ENCODE measurements at regions of chr9 and their contacts with region 1.

Region 1: GRCh38 chr9:128438343-128439109 is 17.3 kb upstream of the ODF2 start:
- DNase-seq: peak; percentile 71 to 94 (median 81)
- H3K4me3 ChIP-seq: no peak overlapping the region
- H3K27ac ChIP-seq: peak overlapping the region in 28 of 59 donors; percentile 5 to 76 (median 47)
- H3K27me3 ChIP-seq: no peaks in the 10 kb centered on the region
- CTCF ChIP-seq: peak; percentile 63 to 98 (median 94)

Region 2: DNA sequence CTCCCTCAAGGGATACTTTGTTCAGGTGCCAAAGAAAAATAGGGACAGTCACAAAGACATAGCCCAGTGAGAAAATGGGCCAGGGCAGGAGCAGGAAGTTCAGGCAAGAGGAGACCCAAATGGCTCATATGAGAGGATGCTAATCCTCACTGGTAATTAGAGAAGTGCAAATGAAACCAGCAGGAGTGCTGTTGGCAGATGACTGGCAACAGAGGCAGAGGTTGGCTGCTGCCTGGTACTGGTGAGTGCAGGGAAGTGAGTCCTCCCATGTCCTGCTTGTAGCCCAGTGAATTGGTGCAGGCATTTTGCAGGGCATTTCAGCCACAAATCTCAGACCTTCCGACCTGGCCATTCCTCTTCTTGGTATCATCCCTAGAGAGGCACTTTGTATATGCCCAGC is 40.7 kb after region 1 on chr9:
- intact Hi-C with region 1: no loop called
- DNase-seq: no peak
- H3K4me3 ChIP-seq: no peak overlapping the region
- H3K27ac ChIP-seq: no peak overlapping the region
- H3K27me3 ChIP-seq: no peaks in the 10 kb centered on the region
- CTCF ChIP-seq: no peak

Region 3: DNA sequence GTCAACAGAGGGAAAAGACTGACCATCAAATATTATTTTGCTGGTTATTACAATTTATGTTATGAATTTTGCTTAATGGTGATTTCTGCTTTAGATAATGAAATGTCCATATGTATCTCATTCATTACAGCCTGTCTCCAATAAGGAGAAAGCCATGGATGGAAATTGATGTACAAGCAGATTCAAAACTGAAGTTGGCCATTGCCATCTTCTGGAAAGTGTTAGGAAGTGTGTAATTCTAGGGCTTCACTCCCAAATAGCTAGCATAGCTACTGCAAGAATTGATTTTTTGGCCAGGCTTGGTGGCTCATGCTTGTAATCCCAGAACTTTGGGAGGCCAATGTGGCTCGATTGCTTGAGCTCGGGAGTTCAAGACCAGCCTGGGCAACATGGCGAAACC is 172.4 kb after region 1 on chr9:
- intact Hi-C with region 1: loop called in 1 of 2 experiments (anchors 5 kb)
- DNase-seq: no peak
- H3K4me3 ChIP-seq: no peak overlapping the region
- H3K27ac ChIP-seq: peak overlapping the region in 1 of 59 donors; percentile 2
- H3K27me3 ChIP-seq: no peaks in the 10 kb centered on the region
- CTCF ChIP-seq: peak in 9 of 56 donors; percentile 6 to 45 (median 18)

Region 4: DNA sequence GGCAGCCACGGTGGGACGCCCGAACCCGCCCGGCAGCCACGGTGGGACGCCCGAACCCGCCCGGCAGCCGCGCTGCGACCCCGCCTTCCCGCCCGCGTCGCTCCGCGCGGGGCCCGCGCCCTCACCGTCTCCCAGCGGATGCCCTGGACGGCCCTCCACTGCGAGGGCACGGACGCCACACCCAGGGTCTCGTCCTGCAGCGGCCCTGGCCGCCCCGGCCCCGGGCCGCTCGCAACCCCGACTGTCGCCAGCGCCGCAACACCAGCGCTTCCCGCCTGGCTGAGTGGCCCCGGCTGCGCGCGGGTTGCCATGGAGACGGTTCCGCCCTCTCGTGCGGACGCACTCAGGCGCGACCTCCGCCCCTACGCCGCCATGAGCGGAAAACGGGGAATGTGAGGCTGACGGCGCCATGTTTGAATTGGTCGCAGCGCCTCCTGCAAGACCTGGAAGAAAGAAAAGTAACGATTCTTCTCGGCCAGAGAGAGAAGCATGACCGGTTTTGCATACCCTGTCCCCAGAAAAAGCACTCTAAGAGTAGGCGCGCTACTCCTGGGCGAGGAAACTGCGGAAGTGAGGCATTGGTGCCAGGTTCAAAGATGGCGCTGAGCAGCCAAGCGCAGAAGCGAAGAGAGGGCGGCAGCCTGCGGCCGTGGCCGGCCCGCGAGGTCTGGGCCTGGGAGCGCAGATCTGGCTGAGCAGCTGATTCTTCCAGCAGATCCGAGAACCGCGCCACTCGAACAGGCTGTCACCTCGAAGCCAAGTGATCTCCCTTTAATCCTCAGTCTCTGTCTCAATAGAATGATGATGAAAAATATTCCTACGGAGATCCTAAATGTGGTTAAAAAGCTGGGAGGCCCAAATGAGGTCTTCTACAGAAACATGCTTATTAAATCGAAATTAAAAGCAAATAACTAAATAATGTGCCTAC is 218.2 kb after region 1 on chr9 and contains the start of gene DYNC2I2:
- intact Hi-C with region 1: loop called in 1 of 2 experiments (anchors 10 kb)
- DNase-seq: peak; percentile 90 to 97 (median 95)
- H3K4me3 ChIP-seq: peak within 1 kb of the TSS; percentile 54 to 93 (median 77)
- H3K27ac ChIP-seq: peak within 1 kb of the TSS; percentile 95 to 100 (median 100)
- H3K27me3 ChIP-seq: no peaks in the 10 kb centered on the region
- CTCF ChIP-seq: peak in 38 of 56 donors; percentile 7 to 65 (median 32)
- total RNA-seq, gene DYNC2I2: 9.3 to 27.2 (median 15.5) TPM

Measured in dorsolateral prefrontal cortex (tissue), 120 donors.